Mammary epithelial cell (primary cell): ENCODE measurements at regions of chr15 and their contacts with region 1.

Region 1: DNA sequence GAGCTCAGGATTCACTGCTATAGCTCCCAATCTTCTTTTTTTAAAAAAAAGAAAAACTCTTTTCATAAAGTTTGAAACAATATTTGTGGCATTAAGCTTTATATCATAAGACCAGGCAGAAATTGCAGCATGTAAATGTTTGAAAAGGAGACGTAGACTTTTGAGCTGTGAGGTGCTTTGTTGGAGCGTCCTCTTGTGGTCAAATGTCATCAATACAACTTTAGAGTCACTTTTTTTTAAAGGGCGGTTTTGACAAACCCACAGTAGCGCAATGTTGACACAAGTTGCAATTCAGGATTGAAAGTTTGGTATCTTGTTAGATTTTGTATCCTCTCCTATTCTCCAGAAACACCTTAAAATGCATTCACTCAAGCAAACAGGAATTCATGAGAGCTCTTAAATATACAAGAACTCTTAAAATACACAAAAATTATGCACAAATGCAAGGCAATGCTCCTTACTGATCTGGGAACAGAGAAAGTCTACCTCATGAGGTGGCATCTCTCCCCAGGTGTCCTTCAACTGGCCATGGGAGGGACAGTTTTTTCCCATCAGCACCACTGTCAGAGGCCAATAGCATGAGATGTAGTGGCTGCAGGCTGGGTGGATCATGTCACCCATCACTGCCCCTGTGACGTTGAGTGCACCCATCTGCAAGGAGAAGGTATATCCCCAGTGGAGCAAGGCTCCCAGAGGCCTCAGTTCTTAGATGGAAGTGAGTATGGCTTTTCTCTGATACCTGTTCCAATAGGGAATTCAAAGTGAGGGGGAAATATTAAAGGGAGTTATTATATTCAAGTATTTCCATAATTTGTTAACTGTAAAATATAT is 70.7 kb downstream of the ANXA2 start:
- DNase-seq: peak; percentile 48
- H3K4me3 ChIP-seq: no peak overlapping the region
- H3K27ac ChIP-seq: no peak overlapping the region
- H3K4me1 ChIP-seq: peaks cover 3% of the 10 kb centered on the region
- H3K27me3 ChIP-seq: no peaks in the 10 kb centered on the region
- CTCF ChIP-seq: peak; percentile 82 to 91

Region 2: DNA sequence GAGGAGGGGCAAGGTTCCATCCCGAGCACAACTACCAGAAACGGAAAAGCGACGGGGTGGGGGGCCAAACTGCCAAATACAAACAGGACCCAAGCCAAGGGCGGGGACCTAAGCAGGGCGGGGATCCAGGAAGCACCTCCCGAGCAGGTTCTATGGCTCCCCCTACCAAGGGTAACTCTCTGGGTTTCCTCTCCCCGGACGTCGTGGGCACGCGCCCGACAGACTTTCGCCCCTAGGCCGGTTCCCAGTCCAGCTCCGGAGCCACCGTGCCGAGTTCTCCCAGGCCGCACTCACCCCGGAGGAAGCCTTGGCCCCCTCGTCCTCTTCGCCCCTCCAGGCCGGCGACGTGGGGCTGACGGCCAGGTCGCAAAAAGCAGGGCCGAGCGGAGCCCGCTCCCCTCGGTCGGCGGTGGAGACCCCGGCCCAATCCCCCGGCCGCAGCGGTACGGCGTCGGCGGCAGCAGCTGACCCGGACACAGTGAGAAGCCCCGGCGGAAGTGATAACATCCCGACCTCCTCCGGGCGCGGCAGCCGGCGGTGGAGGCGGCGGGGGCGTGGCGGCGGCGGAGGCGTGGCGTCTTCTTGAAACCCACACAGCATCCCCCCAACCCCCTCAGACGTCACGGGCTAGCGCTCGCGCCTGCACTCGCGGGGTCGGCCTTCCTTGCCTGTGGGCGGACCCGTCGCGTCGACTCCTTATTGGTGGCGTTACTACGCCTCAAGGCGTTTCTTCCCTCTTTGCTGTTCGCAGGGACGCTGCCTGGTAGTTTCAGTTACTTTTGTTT is 638.0 kb before region 1 on chr15 and contains the start of gene BNIP2:
- CTCF ChIA-PET with region 1: interaction called, 3 read pairs
- dilution Hi-C with region 1: no loop called
- in situ Hi-C with region 1: no loop called
- intact Hi-C with region 1: loop called (anchors 1 kb)
- DNase-seq: peak; percentile 97
- H3K4me3 ChIP-seq: peak within 1 kb of the TSS; percentile 80 to 97 (median 91)
- H3K27ac ChIP-seq: peak within 1 kb of the TSS; percentile 92
- H3K4me1 ChIP-seq: peaks cover 23% of the 10 kb centered on the region
- H3K27me3 ChIP-seq: no peaks in the 10 kb centered on the region
- CTCF ChIP-seq: no peak
- total RNA-seq, gene BNIP2: 78.2 to 107 TPM

Region 3: GRCh38 chr15:59751552-59752413 is 575.3 kb before region 1 on chr15:
- CTCF ChIA-PET with region 1: no interaction called
- dilution Hi-C with region 1: no loop called
- in situ Hi-C with region 1: loop called in 1 of 2 experiments (anchors 25 kb)
- intact Hi-C with region 1: loop called (anchors 1 kb)
- DNase-seq: peak; percentile 41
- H3K4me3 ChIP-seq: no peak overlapping the region
- H3K27ac ChIP-seq: no peak overlapping the region
- H3K4me1 ChIP-seq: no peaks in the 10 kb centered on the region
- H3K27me3 ChIP-seq: no peaks in the 10 kb centered on the region
- CTCF ChIP-seq: peak; percentile 48 to 62

Region 4: DNA sequence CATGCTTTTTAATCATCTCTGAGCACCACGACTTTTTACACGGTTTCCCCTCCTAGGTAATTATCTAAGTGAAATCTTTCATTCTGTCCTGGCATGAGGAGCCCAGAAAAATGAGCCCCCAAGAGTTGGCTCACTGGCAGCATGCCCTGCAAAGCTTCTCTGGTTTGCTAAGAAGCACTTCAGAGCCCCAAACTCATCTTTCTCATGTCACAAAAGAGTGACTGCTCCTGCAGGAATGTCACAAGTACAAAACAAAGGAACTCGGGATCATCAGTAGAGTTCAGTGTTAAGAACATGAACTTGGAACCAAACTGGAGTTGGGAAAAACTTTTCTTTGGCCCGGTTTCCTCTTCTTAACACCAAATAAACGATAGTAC is 199.1 kb before region 1 on chr15:
- CTCF ChIA-PET with region 1: interaction called, 3 read pairs
- dilution Hi-C with region 1: no loop called
- in situ Hi-C with region 1: no loop called
- intact Hi-C with region 1: loop called (anchors 2 kb)
- DNase-seq: no peak
- H3K4me3 ChIP-seq: peak overlapping the region; percentile 43 to 58 (median 46)
- H3K27ac ChIP-seq: peak overlapping the region; percentile 57
- H3K4me1 ChIP-seq: peaks cover 4% of the 10 kb centered on the region
- H3K27me3 ChIP-seq: no peaks in the 10 kb centered on the region
- CTCF ChIP-seq: no peak

Region 5: GRCh38 chr15:60212536-60212935 is 114.5 kb before region 1 on chr15:
- CTCF ChIA-PET with region 1: no interaction called
- dilution Hi-C with region 1: no loop called
- in situ Hi-C with region 1: no loop called
- intact Hi-C with region 1: loop called (anchors 5 kb)
- DNase-seq: peak; percentile 57
- H3K4me3 ChIP-seq: no peak overlapping the region
- H3K27ac ChIP-seq: no peak overlapping the region
- H3K4me1 ChIP-seq: no peaks in the 10 kb centered on the region
- H3K27me3 ChIP-seq: no peaks in the 10 kb centered on the region
- CTCF ChIP-seq: peak in 1 of 2 donors; percentile 4

Region 6: GRCh38 chr15:60444289-60444912 is 117.4 kb after region 1 on chr15:
- CTCF ChIA-PET with region 1: no interaction called
- dilution Hi-C with region 1: no loop called
- in situ Hi-C with region 1: no loop called
- intact Hi-C with region 1: loop called (anchors 1 kb)
- DNase-seq: peak; percentile 26
- H3K4me3 ChIP-seq: no peak overlapping the region
- H3K27ac ChIP-seq: no peak overlapping the region
- H3K4me1 ChIP-seq: peaks cover 9% of the 10 kb centered on the region
- H3K27me3 ChIP-seq: no peaks in the 10 kb centered on the region
- CTCF ChIP-seq: peak; percentile 60 to 63

Region 7: DNA sequence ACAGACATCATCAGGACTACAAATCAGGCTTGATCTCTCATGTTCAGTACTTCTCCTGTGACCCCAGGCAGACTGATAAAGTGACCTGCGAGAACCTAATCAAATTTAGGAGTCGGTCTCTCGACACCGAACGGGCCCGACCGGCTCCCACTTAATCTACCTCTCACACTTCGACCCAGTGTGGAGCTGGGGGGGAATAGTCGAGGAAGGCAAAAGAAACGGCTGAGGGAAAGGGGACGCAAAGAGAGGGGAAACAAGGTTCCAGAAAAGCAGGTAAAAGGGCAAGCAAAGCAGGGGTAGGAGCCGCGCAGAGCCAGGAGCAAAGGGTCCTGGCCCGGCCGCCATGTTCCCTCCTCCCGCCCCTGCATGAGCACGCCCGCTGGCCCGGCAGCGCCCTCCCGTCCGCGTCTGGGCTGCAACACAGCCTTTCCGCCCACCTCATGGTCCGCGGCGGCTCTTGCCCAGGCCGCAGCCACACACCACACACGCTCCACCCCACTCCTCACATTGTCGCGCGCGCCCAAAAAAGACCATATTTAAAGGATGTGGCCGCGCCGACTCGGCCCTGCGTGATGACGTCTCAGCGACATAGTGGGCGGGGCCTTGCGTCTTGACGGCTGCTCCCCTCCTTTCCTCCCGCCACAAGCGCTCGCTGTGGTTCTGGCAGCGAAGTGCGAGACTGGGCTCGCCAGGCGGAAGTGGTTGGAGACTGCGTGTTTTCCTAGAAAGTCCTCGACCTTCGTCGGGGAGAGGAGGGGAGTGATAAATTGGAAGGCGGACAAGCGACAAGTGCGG is 151.7 kb after region 1 on chr15 and contains the start of gene ICE2:
- CTCF ChIA-PET with region 1: no interaction called
- dilution Hi-C with region 1: no loop called
- in situ Hi-C with region 1: no loop called
- intact Hi-C with region 1: no loop called
- DNase-seq: peak; percentile 91
- H3K4me3 ChIP-seq: peak within 1 kb of the TSS; percentile 63 to 82 (median 77)
- H3K27ac ChIP-seq: peak within 1 kb of the TSS; percentile 86
- H3K4me1 ChIP-seq: peaks cover 25% of the 10 kb centered on the region
- H3K27me3 ChIP-seq: no peaks in the 10 kb centered on the region
- CTCF ChIP-seq: no peak
- total RNA-seq, gene ICE2: 31.2 to 48.0 TPM